SK-MEL-5 (cell line): ENCODE measurements at regions of chr5 and their contacts with region 1.

Region 1: DNA sequence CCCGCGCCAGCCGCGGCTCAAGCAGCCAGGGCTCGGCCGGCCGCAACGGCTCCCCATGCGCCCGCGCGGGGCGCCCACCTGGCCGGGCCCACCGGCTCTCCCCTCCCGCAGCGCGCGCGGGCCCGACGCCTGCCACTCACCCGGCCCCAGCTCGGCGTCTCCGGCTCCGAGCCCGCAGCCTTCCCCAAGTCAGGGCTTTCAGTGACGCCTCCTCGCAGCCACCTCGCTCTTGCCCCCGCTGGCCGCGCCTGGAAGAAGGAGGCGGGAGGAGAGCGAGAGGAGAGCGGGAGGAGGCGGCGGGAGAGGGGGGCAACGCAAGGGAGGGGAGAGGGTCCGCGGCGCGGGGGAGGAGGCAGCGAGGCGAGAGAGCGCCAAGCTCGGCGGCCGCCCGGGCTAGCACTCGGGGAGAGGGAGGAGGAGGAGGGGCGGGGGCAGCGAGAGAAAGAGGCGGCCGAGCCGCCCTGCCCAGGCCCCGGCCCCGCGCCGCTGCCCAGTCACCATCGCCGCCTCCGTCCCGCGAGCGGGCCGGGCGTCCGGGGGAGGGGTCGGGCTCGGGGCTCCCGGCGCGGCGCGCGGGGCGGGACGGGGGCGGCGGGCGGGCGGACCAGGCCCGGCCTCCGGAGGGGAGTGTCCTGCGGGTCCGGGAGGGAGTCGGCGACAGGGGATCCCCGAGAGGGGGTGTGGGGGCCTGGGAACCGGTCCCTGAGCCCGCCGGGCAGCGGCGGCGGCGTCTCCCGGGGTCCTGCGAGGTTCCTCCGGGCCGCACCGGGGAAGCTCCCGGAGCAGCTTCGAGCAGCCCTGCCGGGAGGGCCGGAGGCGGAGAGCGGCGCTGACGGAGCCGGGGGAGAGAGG is at the start of gene LHFPL2:
- DNase-seq: peak; percentile 58
- total RNA-seq, gene LHFPL2: 57.2 and 58.0 TPM in 2 replicates

Region 2: DNA sequence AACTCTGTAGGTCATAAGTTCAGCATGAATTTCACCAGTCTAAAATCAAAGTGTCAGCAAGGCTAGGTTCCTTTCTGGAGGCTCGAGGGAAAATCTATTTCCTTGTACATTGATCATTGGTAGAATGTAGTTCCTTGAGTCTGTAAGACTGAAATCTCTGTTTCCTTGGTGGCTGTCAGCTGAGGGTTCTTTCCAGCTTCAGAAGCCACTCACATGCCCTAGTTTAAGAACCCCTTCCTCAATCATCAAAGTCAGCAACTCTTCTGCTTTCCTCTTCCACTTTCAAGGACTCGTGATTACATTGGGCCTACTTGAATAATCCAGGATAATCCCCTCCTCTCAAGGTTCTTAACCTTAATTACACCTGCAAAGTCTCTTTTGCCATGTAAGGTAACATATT is 293.0 kb before region 1 on chr5:
- in situ Hi-C with region 1: no loop called
- DNase-seq: no peak

Region 3: GRCh38 chr5:78537821-78538220 is 110.8 kb before region 1 on chr5:
- in situ Hi-C with region 1: loop called (anchors 25 kb)
- DNase-seq: peak; percentile 68